HCT116 (cell line): ENCODE measurements at regions of chrX and their contacts with region 1.

Region 1: DNA sequence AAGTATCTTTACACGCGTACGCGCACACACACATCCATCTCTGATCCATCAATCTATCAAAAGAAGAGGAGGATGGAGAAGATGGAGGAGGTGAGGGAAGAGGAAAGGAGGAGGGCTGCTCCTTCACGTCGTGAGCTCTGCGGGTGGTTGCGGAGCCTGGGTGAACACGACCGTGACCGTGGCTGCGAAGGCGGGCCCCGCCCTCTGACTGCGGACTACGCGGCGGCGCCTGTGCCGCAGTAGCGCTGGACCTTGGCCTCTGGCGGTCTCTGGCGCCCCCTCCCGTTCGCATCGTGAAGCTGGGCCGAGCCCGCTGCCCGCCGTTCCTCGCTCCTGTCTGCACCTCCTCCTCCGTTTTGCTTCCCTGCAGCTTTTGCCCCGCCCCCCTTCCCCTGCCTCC is 37.7 kb upstream of the ARAF start:
- DNase-seq: peak; percentile 38
- ATAC-seq: peak; percentile 99
- H3K4me3 ChIP-seq: peak overlapping the region; percentile 2 to 20; a peak in 1 of 4 replicates
- H3K27ac ChIP-seq: no peak overlapping the region
- H3K4me1 ChIP-seq: peaks cover 0 to 6% of the 10 kb centered on the region in 2 experiments; a peak in 1 of 4 replicates
- H3K27me3 ChIP-seq: no peaks in the 10 kb centered on the region
- CTCF ChIP-seq: peak; percentile 41 to 62 (median 59); a peak in 5 of 6 replicates
- POLR2A ChIP-seq: no peak
- RAD21 ChIP-seq: peak; percentile 89

Region 2: DNA sequence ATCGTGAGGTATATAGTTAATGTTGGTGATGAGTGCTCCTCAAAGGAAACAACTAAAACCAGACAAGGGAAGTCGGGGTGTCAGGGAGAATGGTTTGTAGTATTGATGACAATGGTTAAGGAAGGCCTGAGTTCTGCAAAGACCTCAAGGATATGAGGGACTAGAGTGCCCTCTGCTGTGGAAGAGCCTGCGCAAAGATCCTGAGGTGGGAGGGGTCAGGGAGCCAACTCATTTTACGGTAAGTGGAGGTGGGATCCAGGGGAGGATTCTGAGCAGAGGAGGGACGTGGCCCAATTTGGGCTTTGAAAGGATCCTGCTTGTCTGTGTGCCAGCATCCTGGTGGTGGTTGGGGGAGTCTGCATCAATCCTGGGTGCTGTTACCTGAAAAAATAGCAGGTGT is 318.3 kb before region 1 on chrX:
- CTCF ChIA-PET with region 1: no interaction called
- POLR2A ChIA-PET with region 1: no interaction called
- RAD21 ChIA-PET with region 1: no interaction called
- intact Hi-C with region 1: no loop called
- DNase-seq: no peak
- ATAC-seq: peak; percentile 52
- H3K4me3 ChIP-seq: no peak overlapping the region
- H3K27ac ChIP-seq: no peak overlapping the region
- H3K4me1 ChIP-seq: no peaks in the 10 kb centered on the region
- H3K27me3 ChIP-seq: no peaks in the 10 kb centered on the region
- CTCF ChIP-seq: no peak
- POLR2A ChIP-seq: no peak
- RAD21 ChIP-seq: 0 out of 2 replicates have a peak, but pooled peaks have one; percentile 2

Region 3: DNA sequence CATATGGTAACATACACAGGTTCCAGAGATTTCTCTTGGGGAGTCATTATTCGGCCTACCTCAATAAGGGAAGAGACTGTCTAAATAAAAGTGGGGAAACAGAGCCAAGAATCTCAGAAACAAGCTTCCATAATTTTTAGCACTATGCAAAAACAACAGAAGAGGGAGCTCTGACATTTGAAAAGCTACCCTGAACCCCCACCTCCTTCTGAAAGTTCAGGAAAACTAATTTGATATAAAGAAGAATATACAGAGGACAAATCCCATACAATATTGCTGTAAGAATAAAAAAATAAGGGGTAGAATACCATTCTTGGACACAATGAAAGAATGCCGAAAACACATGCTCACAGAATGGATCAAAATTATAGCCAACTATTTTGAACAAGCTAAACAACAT is 26.0 kb before region 1 on chrX:
- CTCF ChIA-PET with region 1: interaction called, 12 read pairs
- POLR2A ChIA-PET with region 1: interaction called, 3 read pairs
- RAD21 ChIA-PET with region 1: interaction called, 3 to 5 read pairs
- intact Hi-C with region 1: loop called (anchors 1 kb)
- DNase-seq: no peak
- ATAC-seq: no peak
- H3K4me3 ChIP-seq: no peak overlapping the region
- H3K27ac ChIP-seq: no peak overlapping the region
- H3K4me1 ChIP-seq: peaks cover 0 to 2% of the 10 kb centered on the region in 2 experiments; a peak in 1 of 4 replicates
- H3K27me3 ChIP-seq: no peaks in the 10 kb centered on the region
- CTCF ChIP-seq: peak; percentile 29 to 66 (median 43); a peak in 5 of 6 replicates
- POLR2A ChIP-seq: no peak
- RAD21 ChIP-seq: peak; percentile 75